ENCODE measurements at regions of chr1 and their contacts with region 1.

Region 1: DNA sequence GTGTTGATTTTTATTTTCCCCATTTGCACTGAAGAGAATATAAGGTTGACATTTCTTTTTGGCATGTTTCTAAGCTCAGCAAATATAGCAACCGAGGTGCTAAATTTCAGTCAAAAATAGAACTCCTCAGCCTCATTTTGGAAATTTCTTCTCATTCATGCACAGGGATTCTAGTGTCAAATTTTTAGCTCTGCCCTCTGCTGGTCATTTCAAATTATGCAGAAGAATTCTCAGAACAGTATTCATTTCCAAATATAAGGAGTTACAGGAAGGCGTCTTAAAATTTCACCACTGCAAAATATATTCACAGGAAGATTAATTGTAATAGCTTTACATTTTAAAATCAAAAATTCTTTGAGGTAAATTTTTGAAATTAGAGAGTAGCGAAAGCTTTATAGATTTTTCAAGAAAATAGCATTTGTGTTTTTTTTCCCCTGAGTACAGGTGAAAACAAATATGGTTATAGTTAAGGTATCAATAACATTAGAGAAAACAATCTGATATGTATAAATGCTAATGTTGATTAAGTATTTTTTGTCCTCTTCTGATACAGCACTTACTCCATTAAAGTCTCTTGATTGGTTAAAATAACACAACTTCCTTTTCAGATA is 57.9 kb downstream of the FMN2 start:
- H3K4me3 ChIP-seq: no peak overlapping the region
- H3K27ac ChIP-seq: no peak overlapping the region
- H3K4me1 ChIP-seq: no peaks in the 10 kb centered on the region
- CTCF ChIP-seq: no peak

Region 2: GRCh38 chr1:240027059-240027462 is 122.5 kb before region 1 on chr1:
- CTCF ChIA-PET with region 1: interaction called, 120 read pairs
- POLR2A ChIA-PET with region 1: no interaction called
- H3K4me3 ChIP-seq: no peak overlapping the region
- H3K27ac ChIP-seq: no peak overlapping the region
- H3K4me1 ChIP-seq: no peaks in the 10 kb centered on the region
- CTCF ChIP-seq: peak; percentile 78; the same call in 1 of the 2 replicates

Region 3: GRCh38 chr1:240073097-240073496 is 76.5 kb before region 1 on chr1:
- CTCF ChIA-PET with region 1: interaction called, 13 read pairs
- POLR2A ChIA-PET with region 1: no interaction called
- H3K4me3 ChIP-seq: no peak overlapping the region
- H3K27ac ChIP-seq: no peak overlapping the region
- H3K4me1 ChIP-seq: no peaks in the 10 kb centered on the region
- CTCF ChIP-seq: no peak

Region 4: DNA sequence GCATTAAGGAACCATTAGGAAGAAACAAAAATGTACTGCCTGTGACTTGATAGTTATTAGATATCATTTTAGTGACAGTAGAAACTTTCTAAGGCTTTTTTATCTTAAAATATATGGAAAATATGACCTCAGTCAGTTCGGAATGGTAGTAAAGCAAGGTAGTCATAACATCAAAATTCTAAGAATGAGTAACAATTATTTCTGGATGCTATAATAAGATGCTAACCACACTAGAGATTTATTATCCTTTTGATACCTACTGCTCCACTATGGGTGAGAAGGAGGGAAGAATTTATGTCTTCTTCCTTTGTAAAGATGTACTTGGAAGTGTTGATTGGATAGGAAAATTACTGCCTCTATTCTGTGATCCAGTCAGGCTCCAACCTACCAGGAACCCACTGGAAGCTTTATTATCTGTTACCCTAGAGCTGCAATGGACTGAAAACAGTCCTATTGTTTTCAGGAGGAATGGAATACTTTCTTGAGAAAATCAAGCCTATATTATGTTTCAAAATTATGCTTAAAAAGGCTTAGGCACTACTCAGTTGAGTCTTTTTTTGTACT is 49.1 kb before region 1 on chr1:
- CTCF ChIA-PET with region 1: interaction called, 39 read pairs
- POLR2A ChIA-PET with region 1: no interaction called
- H3K4me3 ChIP-seq: no peak overlapping the region
- H3K27ac ChIP-seq: no peak overlapping the region
- H3K4me1 ChIP-seq: peaks cover 11% of the 10 kb centered on the region
- CTCF ChIP-seq: no peak

Region 5: DNA sequence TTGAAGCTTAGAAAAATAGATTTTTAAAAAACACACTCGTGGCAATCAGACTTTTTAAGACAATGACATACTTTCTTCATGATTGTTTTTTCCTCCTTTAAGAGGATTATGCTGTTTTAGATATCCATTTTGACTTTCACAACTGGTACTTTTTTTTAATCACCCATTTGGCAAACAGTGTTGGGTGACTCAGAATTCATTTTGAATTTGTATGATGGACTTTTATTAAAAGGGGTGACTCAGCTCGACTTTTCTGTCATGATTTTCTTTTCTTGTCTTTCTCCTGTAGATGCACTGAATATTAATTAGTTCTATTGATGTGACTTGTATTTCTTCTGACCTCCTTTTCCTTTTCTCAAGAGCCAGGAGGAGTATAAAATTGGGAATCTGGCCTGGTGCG is 13.2 kb before region 1 on chr1:
- CTCF ChIA-PET with region 1: interaction called, 43 read pairs
- POLR2A ChIA-PET with region 1: no interaction called
- H3K4me3 ChIP-seq: no peak overlapping the region
- H3K27ac ChIP-seq: no peak overlapping the region
- H3K4me1 ChIP-seq: no peaks in the 10 kb centered on the region
- CTCF ChIP-seq: no peak

Region 6: GRCh38 chr1:240189386-240189989 is 39.9 kb after region 1 on chr1:
- CTCF ChIA-PET with region 1: interaction called, 25 read pairs
- POLR2A ChIA-PET with region 1: no interaction called
- H3K4me3 ChIP-seq: no peak overlapping the region
- H3K27ac ChIP-seq: no peak overlapping the region
- H3K4me1 ChIP-seq: peaks cover 4% of the 10 kb centered on the region; the same call in 1 of the 2 replicates
- CTCF ChIP-seq: peak; percentile 61

Measured in HEK293 (cell line).